AG04449 (cell line): ENCODE measurements at regions of chr3 and their contacts with region 1.

Region 1: DNA sequence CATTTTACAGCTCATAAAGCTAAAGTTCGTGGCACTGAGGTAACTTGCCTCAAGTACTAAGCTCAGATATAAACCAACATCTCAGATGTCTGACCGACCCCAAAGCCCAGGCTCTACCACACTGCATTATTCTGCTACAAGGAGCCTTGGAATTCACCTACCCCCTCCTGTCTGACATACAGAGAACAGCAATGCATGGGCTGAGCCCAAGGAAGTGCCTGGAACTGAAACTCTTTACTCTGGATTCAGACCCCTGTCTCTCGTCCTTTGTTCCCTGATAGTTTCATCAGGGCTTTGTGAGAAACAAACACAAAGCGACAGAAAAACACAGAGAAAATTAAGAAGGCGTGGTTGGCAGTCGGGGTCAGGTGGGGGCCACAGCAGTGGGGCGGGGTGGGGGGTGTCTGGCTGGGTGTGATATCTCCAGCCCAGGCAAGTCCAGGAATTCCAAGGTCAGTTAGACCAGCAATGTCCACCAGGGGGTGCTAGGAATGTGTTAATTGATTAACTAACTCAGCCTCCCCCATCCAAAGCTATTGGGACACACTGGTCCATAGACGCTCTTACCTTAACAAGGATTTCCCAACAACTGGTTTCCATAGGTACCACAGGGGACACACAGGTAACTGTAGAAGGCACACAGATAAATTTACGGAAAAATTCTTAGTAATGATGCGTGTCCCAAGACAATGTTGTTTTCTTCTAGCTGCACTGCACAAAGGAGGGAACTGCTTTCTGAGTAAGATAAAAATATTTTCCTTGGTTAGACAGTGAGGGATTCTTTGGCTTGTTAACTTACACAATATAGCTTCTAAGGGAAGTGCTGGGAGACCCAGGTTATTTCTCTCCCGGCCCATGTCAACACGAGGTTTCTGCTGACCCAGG is 18.8 kb upstream of the SSUH2 start:
- DNase-seq: no peak
- H3K4me3 ChIP-seq: no peak overlapping the region
- CTCF ChIP-seq: peak; percentile 62

Region 2: GRCh38 chr3:8650583-8651416 is 12.6 kb before region 1 on chr3:
- CTCF ChIA-PET with region 1: interaction called, 25 read pairs
- POLR2A ChIA-PET with region 1: no interaction called
- DNase-seq: no peak
- H3K4me3 ChIP-seq: no peak overlapping the region
- CTCF ChIP-seq: no peak

Region 3: DNA sequence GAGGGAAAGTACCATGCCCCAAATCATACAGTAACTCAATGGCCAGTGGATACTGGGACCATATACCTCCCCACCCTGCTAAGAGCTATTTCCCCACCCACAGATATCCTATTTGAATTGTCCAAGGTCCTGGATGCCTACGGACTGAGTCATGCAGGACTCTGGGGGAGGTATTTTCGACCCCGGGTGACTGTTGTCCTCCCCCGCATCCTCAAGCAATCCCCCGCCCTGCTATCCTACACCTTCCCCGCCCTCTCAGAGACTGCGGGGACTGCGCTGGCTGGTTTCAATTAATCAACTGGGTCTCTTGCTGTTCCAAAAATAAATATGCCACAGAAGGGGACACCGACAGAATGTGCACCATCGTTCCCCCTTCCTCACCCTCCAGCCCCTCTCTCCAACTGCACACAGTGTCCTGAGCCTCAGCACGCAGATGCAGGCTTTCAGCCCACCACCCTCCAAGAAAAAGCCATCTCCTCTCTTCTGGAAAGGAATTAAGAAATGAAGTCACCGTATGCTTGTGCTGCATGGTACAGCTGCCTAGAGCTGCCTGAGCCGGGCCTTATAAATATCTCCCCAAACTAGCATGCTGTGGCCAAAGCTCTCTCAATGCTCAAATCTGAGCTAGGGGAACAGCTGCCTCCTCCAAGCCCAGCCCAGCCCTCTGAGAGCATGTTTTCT is 78.3 kb after region 1 on chr3:
- CTCF ChIA-PET with region 1: interaction called, 45 read pairs
- POLR2A ChIA-PET with region 1: no interaction called
- DNase-seq: no peak
- H3K4me3 ChIP-seq: peak overlapping the region; percentile 37
- CTCF ChIP-seq: no peak

Region 4: DNA sequence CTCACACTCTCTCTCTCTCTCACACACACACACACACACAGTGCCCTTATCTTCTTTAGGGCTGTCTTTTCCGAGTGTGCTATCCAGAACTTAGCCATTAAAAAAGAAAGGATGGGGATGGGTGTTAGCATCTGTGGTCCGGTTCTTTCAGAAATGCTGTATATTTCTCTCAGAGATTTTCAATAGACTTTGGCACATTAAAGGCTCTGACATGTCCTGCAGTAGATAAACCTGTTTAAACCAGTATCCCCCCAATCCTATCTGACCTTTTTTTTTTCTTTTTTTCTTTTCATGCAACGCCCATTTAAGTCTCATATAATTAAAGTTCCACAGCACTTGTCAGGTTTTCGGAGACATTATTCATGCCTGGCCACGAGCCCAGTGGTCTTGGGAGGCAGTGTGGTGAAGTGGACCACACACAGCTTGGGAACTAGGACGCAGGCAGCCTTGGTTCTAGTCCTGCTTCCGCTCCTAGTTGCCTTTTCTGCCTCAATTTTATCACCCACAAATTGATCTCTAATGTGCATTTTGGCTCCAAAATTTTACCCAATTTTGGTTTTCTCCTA is 83.4 kb after region 1 on chr3:
- CTCF ChIA-PET with region 1: interaction called, 45 read pairs
- POLR2A ChIA-PET with region 1: no interaction called
- DNase-seq: no peak
- H3K4me3 ChIP-seq: no peak overlapping the region
- CTCF ChIP-seq: no peak

Region 5: GRCh38 chr3:8755563-8756237 is 92.3 kb after region 1 on chr3:
- CTCF ChIA-PET with region 1: interaction called, 70 read pairs
- POLR2A ChIA-PET with region 1: interaction called, 4 read pairs
- DNase-seq: no peak
- H3K4me3 ChIP-seq: no peak overlapping the region
- CTCF ChIP-seq: peak; percentile 24

Region 6: GRCh38 chr3:9067352-9067975 is 404.0 kb after region 1 on chr3:
- CTCF ChIA-PET with region 1: interaction called, 15 read pairs
- POLR2A ChIA-PET with region 1: no interaction called
- DNase-seq: peak; percentile 23
- H3K4me3 ChIP-seq: no peak overlapping the region
- CTCF ChIP-seq: peak; percentile 85